ENCODE measurements at regions of chr14 and their contacts with region 1.

Region 1: GRCh38 chr14:58072288-58073071 is 79.5 kb downstream of the ARMH4 start:
- DNase-seq: peak; percentile 58
- ATAC-seq: peak; percentile 66
- H3K4me3 Mint-ChIP-seq: no peak overlapping the region
- H3K27ac Mint-ChIP-seq: no peak overlapping the region
- H3K4me1 Mint-ChIP-seq: no peaks in the 10 kb centered on the region
- H3K27me3 Mint-ChIP-seq: peaks cover 12% of the 10 kb centered on the region
- CTCF ChIP-seq: peak; percentile 68

Region 2: DNA sequence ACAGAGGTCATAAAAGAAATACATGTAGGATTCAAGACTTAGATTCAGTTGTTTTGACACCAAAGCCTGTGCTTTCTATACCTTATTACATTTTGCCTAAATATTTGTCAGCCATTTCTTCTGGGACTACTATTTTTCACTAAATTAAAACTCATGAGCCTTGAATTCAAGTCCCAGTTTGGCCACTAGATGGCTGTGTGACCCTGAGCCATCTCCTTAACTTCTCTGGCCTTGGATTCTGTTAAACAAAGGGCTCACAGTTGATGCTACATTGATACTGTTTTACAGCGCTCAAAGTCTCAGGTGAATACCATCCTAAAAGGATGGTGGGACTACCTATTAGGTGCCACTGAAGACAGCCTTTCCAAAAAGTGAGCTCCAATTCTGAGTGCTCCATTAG is 539.3 kb before region 1 on chr14:
- CTCF ChIA-PET with region 1: no interaction called
- POLR2A ChIA-PET with region 1: no interaction called
- intact Hi-C with region 1: loop called (anchors 10 kb)
- DNase-seq: peak; percentile 47
- ATAC-seq: no peak
- H3K4me3 Mint-ChIP-seq: no peak overlapping the region
- H3K27ac Mint-ChIP-seq: no peak overlapping the region
- H3K4me1 Mint-ChIP-seq: no peaks in the 10 kb centered on the region
- H3K27me3 Mint-ChIP-seq: peaks cover 5% of the 10 kb centered on the region
- CTCF ChIP-seq: peak; percentile 56

Region 3: DNA sequence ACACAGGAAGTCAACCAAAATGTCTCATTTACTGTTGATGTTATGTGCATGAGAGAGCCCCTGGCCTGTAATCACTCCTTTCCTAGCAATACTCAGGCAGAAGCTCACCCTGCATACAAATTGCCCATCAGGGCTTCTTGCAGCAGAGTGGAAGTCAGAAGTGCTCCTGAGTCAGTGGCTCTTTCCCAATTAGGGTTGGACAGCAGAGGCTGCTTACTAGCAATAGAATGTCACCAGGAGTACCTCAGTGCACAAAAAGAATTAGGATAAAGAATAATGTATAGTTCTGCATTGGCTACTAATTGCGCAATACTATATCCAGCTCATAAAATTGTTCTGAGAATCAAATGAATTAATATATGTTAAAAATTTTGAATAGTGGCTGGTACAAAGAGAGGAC is 367.7 kb before region 1 on chr14:
- CTCF ChIA-PET with region 1: no interaction called
- POLR2A ChIA-PET with region 1: no interaction called
- intact Hi-C with region 1: loop called (anchors 10 kb)
- DNase-seq: no peak
- ATAC-seq: no peak
- H3K4me3 Mint-ChIP-seq: no peak overlapping the region
- H3K27ac Mint-ChIP-seq: no peak overlapping the region
- H3K4me1 Mint-ChIP-seq: no peaks in the 10 kb centered on the region
- H3K27me3 Mint-ChIP-seq: no peaks in the 10 kb centered on the region
- CTCF ChIP-seq: no peak

Region 4: DNA sequence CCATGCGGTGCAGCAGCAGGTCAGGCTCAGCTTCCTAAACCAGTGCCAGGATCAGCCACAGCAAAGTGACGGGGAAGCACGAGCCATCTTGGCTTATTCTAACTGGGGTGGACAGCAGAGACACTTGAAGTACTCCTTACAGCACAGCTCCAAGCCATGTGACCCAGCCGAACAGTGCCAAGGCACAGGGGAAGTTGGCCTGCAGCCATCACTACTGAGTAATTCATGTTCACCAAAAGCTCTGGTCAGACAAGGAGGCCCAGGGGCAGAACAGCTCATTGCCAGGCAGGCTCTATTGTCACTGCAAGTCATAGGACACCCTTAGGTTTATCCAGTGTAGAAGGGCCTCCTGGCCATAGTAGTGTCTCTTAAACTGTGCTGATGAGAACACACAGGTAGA is 183.2 kb before region 1 on chr14:
- CTCF ChIA-PET with region 1: no interaction called
- POLR2A ChIA-PET with region 1: no interaction called
- intact Hi-C with region 1: no loop called
- DNase-seq: no peak
- ATAC-seq: no peak
- H3K4me3 Mint-ChIP-seq: no peak overlapping the region
- H3K27ac Mint-ChIP-seq: no peak overlapping the region
- H3K4me1 Mint-ChIP-seq: no peaks in the 10 kb centered on the region
- H3K27me3 Mint-ChIP-seq: peaks cover 2% of the 10 kb centered on the region
- CTCF ChIP-seq: no peak

Region 5: GRCh38 chr14:58014778-58015177 is 57.7 kb before region 1 on chr14:
- CTCF ChIA-PET with region 1: no interaction called
- POLR2A ChIA-PET with region 1: no interaction called
- intact Hi-C with region 1: no loop called
- DNase-seq: no peak
- ATAC-seq: no peak
- H3K4me3 Mint-ChIP-seq: no peak overlapping the region
- H3K27ac Mint-ChIP-seq: no peak overlapping the region
- H3K4me1 Mint-ChIP-seq: no peaks in the 10 kb centered on the region
- H3K27me3 Mint-ChIP-seq: no peaks in the 10 kb centered on the region
- CTCF ChIP-seq: no peak

Region 6: DNA sequence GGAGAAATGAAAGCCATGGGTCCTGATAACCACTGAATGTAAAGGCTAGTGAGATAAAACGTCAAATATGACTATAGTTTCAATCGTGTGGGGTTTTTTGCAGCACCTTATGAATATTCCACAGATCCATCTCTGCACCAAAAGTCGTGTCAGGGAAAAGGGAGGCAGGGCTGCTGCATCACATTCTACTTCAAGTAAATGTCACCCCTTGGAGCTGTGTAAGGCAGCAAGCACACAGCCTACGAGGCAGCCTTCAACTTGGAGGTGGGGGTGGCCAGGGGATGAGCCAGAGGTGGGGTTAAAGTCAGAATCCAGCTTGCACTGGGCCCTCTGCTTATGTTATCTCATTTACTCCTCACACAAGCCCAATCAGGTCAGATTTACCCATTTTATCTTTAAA is 10.9 kb before region 1 on chr14:
- CTCF ChIA-PET with region 1: interaction called, 12 read pairs
- POLR2A ChIA-PET with region 1: interaction called, 3 read pairs
- intact Hi-C with region 1: no loop called
- DNase-seq: no peak
- ATAC-seq: no peak
- H3K4me3 Mint-ChIP-seq: no peak overlapping the region
- H3K27ac Mint-ChIP-seq: no peak overlapping the region
- H3K4me1 Mint-ChIP-seq: no peaks in the 10 kb centered on the region
- H3K27me3 Mint-ChIP-seq: peaks cover 6% of the 10 kb centered on the region
- CTCF ChIP-seq: no peak

Region 7: GRCh38 chr14:58104808-58105207 is 32.3 kb after region 1 on chr14:
- CTCF ChIA-PET with region 1: no interaction called
- POLR2A ChIA-PET with region 1: no interaction called
- intact Hi-C with region 1: no loop called
- DNase-seq: no peak
- ATAC-seq: no peak
- H3K4me3 Mint-ChIP-seq: no peak overlapping the region
- H3K27ac Mint-ChIP-seq: no peak overlapping the region
- H3K4me1 Mint-ChIP-seq: no peaks in the 10 kb centered on the region
- H3K27me3 Mint-ChIP-seq: peaks cover 14% of the 10 kb centered on the region
- CTCF ChIP-seq: no peak